ENCODE measurements at regions of chr18 and their contacts with region 1.

Region 1: DNA sequence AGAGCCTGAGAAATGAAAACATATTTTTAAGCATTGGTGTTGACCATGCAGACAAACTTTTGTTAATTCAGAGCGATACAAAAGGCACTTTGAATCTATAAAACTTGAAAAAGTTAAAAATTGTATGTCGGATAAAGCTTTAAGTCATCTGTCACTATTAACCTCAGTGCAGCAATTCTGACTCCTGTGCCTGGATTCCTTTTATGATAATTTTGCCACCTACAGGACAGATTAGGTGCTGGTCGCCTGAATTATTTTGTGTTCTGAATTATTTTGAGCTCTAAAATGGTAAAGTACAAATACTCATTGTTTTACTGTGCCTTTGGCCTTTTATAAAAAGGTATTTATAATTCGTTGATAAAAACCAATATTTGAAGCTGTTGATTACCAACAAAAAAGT is 19.4 kb upstream of the RNF138 start:
- DNase-seq: no peak
- ATAC-seq: peak; percentile 28
- H3K4me3 Mint-ChIP-seq: no peak overlapping the region
- H3K27ac Mint-ChIP-seq: no peak overlapping the region
- H3K4me1 Mint-ChIP-seq: no peaks in the 10 kb centered on the region
- H3K27me3 Mint-ChIP-seq: no peaks in the 10 kb centered on the region
- CTCF ChIP-seq: no peak

Region 2: DNA sequence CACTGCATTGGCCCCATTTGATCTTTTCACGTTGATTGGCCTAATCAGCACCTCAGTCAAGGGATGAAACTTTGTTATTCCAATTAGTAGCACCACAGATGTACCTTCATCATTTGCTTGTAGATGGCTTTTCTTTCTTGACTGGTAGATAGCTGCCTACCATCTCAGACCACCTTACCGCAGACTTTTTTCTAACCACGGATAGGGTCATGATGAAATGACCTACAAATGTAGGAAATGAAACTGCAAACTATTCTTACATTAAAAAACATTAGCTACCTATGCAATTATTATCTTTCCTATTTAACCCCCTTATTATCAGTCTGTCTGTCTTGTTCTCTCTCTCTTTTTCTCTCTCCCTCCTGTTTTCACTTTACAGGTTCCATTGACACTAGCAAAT is 289.3 kb before region 1 on chr18:
- CTCF ChIA-PET with region 1: no interaction called
- POLR2A ChIA-PET with region 1: no interaction called
- intact Hi-C with region 1: no loop called
- DNase-seq: no peak
- ATAC-seq: no peak
- H3K4me3 Mint-ChIP-seq: no peak overlapping the region
- H3K27ac Mint-ChIP-seq: no peak overlapping the region
- H3K4me1 Mint-ChIP-seq: no peaks in the 10 kb centered on the region
- H3K27me3 Mint-ChIP-seq: peaks cover 3% of the 10 kb centered on the region
- CTCF ChIP-seq: no peak

Region 3: GRCh38 chr18:31977270-31977872 is 95.0 kb before region 1 on chr18:
- CTCF ChIA-PET with region 1: interaction called, 12 read pairs
- POLR2A ChIA-PET with region 1: no interaction called
- intact Hi-C with region 1: no loop called
- DNase-seq: no peak
- ATAC-seq: peak; percentile 25
- H3K4me3 Mint-ChIP-seq: no peak overlapping the region
- H3K27ac Mint-ChIP-seq: no peak overlapping the region
- H3K4me1 Mint-ChIP-seq: no peaks in the 10 kb centered on the region
- H3K27me3 Mint-ChIP-seq: no peaks in the 10 kb centered on the region
- CTCF ChIP-seq: no peak

Region 4: GRCh38 chr18:32056613-32057358 is 15.5 kb before region 1 on chr18:
- CTCF ChIA-PET with region 1: interaction called, 10 read pairs
- POLR2A ChIA-PET with region 1: interaction called, 4 read pairs
- intact Hi-C with region 1: no loop called
- DNase-seq: no peak
- ATAC-seq: no peak
- H3K4me3 Mint-ChIP-seq: no peak overlapping the region
- H3K27ac Mint-ChIP-seq: no peak overlapping the region
- H3K4me1 Mint-ChIP-seq: no peaks in the 10 kb centered on the region
- H3K27me3 Mint-ChIP-seq: no peaks in the 10 kb centered on the region
- CTCF ChIP-seq: no peak

Measured in activated B cell treated with CpG ODN at 0.5 μM for 24 hours (primary cell).